ENCODE measurements at regions of chr4 and their contacts with region 1.

Region 1: DNA sequence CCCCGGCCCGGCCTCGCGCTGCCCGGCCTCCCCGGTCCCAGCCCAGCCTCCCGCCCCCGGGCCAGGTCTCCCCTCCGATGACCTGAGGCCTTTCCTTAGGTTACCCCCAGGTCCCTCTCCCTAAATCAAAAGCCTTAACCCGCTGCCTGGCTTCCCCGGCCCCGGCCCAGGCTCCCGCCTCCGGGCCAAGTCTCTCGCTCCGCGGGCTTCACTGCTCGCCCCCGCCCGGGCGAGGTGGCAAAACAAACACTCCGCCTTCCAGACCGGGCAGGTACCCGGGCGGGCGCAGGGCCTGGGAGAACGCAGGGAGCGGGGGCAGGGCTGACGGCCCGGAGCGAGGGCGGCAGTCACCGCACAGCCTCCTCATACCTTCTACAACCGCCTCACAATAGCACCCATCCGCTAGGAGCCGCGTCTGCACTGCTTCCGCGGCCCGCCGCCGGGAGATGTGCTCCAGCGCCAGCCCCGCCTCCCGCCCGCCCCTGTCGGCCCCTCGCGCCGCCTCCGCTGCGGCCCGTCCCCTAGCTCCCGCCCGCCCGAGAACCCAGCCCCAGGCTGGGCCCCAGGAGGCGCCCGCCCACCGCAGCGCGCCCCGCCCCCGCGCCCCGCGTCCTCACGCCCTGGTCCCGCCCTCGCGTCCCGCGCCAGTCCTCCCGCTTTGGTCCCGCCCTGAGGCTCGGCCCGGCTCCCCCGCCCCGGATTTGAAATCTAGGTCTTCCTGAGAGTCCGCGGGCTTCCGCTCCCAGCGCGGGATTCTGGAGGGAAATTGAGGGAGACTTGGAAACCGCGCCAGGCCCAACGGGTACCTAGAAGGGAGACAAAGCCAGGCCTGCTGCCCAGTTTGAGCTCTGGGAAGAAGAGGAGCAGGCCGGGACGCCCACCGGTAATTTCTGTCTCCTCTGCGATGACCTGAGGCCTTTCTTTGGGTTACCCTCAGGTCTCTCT is at the starts of genes CASP3 and PRIMPOL:
- DNase-seq: peak; percentile 90 to 98 (median 93)
- ATAC-seq: peak; percentile 96
- H3K4me3 ChIP-seq: peak within 1 kb of the TSS; percentile 92
- H3K4me3 Mint-ChIP-seq: peak within 1 kb of the TSS; percentile 92 to 99 (median 97)
- H3K27ac ChIP-seq: peak within 1 kb of the TSS; percentile 91
- H3K27ac Mint-ChIP-seq: peak within 1 kb of the TSS; percentile 91 to 97 (median 95)
- H3K4me1 ChIP-seq: peaks cover 26 to 37% of the 10 kb centered on the region in 2 donors
- H3K4me1 Mint-ChIP-seq: peaks cover 47 to 69% (median 54%) of the 10 kb centered on the region in 7 donors
- H3K27me3 ChIP-seq: no peaks in the 10 kb centered on the region
- H3K27me3 Mint-ChIP-seq: no peaks in the 10 kb centered on the region
- total RNA-seq, gene CASP3: 12.4 to 73.4 (median 17.2) TPM
- total RNA-seq, gene PRIMPOL: 12.1 to 19.3 (median 16.7) TPM

Region 2: DNA sequence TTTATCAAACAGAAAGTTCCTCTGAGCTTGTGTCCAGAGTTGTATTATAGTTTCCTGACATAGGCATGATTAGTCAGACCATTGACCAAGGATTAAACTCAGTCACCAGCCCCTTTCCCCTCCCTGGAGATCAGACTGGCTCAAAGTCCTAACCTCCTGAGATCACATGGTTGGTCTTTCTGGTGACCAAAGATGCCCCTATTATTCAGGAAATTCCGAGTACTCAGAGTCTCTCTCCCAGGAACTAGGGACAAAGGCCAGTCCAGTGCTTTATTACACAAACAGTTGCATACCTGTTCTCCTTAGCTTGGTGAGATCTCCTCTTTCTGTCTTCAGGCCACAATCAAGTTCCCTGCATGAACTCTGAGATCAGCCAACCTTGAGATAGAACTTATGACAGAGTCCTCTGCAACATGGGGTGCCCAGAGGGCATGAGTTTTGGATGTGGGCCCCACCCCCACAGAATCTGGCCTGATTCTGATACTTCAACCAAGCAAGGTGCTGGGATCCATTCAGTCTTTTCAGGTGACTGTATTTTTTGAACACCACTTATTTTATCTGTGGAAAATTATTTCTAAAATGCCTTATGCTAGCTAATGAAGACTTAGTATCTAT is 417.0 kb before region 1 on chr4:
- CTCF ChIA-PET with region 1: no interaction called
- POLR2A ChIA-PET with region 1: interaction called, 5 read pairs
- intact Hi-C with region 1: loop called in 1 of 2 experiments (anchors 1 kb)
- DNase-seq: no peak
- ATAC-seq: no peak
- H3K4me3 ChIP-seq: no peak overlapping the region
- H3K4me3 Mint-ChIP-seq: no peak overlapping the region
- H3K27ac ChIP-seq: no peak overlapping the region
- H3K27ac Mint-ChIP-seq: peak overlapping the region in 4 of 9 donors; percentile 1 to 42 (median 26)
- H3K4me1 ChIP-seq: peaks cover 15 to 19% of the 10 kb centered on the region in 2 donors
- H3K4me1 Mint-ChIP-seq: peaks cover 16 to 78% (median 30%) of the 10 kb centered on the region in 7 donors
- H3K27me3 ChIP-seq: no peaks in the 10 kb centered on the region
- H3K27me3 Mint-ChIP-seq: peaks cover 0 to 11% (median 0%) of the 10 kb centered on the region in 5 donors

Region 3: DNA sequence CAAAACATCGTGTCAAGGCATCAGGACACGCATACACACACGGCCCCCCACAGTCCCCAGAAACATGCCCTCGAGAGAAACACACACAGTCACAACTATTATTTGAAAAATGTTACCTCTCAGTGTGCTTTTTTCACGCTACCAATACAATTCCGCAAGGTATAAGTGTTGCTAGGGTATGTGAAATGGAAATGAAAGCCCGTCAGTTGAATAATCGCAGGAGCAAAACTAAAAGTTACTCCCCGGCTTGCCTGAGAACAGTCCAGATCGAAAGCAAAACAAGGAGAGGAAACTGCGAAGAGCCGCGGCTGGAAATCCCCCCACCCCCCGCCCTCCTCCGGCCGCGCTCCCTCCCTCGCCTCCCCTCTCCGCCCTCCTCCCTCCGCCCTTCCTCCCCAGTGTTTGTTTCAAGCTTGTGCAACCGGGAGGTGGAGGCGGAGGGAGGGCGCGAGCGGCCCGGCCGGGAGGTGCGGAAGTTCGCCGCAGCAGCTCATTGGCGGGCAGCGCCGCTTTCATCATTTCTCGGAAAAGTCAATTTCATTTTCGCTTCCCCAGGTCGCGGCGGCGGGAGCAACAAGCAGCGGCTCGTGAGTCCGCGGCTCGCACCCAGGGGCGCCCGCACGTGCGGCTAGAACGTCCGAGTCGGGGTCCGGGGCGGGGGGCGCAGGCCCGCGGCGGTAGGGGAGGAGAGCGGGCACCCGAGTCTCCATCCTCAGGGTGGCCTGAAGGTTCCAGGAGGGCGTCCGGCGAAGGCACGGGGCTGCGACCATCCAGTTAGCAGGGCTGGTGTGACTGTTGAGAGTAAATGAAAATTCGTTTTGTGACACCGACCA is 174.8 kb before region 1 on chr4 and contains the start of gene IRF2:
- CTCF ChIA-PET with region 1: no interaction called
- POLR2A ChIA-PET with region 1: interaction called, 16 read pairs
- intact Hi-C with region 1: loop called (anchors 1 kb)
- DNase-seq: peak; percentile 80 to 98 (median 95)
- ATAC-seq: peak; percentile 93
- H3K4me3 ChIP-seq: peak within 1 kb of the TSS; percentile 89
- H3K4me3 Mint-ChIP-seq: peak within 1 kb of the TSS; percentile 97 to 100 (median 99)
- H3K27ac ChIP-seq: peak within 1 kb of the TSS; percentile 96
- H3K27ac Mint-ChIP-seq: peak within 1 kb of the TSS; percentile 95 to 100 (median 99)
- H3K4me1 ChIP-seq: peaks cover 27 to 34% of the 10 kb centered on the region in 2 donors
- H3K4me1 Mint-ChIP-seq: peaks cover 39 to 72% (median 66%) of the 10 kb centered on the region in 7 donors
- H3K27me3 ChIP-seq: no peaks in the 10 kb centered on the region
- H3K27me3 Mint-ChIP-seq: peaks cover 0 to 4% (median 0%) of the 10 kb centered on the region in 5 donors
- total RNA-seq, gene IRF2: 31.2 to 86.3 (median 75.0) TPM

Region 4: DNA sequence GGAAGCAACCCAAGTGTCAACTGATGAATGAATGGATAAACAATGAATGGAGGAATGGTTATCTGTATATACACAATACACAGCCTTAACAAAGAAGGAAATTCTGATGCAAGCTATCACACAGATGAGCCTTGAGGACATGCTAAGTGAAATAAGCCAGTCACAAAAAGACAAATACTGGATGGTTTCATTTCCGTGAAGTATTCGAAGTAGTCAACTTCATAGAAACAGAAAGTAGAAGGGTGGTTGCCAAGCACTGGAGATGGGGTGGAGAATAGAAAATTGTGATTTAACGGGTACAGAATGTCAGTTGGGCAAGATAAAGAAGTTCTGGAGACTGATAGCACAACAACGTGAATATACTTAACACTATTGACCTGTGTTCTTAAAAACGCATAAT is 56.4 kb after region 1 on chr4:
- CTCF ChIA-PET with region 1: no interaction called
- POLR2A ChIA-PET with region 1: no interaction called
- intact Hi-C with region 1: loop called in 1 of 2 experiments (anchors 2 kb)
- DNase-seq: no peak
- ATAC-seq: no peak
- H3K4me3 ChIP-seq: no peak overlapping the region
- H3K4me3 Mint-ChIP-seq: peak overlapping the region in 2 of 10 donors; percentile 6 to 57
- H3K27ac ChIP-seq: no peak overlapping the region
- H3K27ac Mint-ChIP-seq: peak overlapping the region in 1 of 9 donors; percentile 83
- H3K4me1 ChIP-seq: no peaks in the 10 kb centered on the region
- H3K4me1 Mint-ChIP-seq: peaks cover 0 to 29% (median 0%) of the 10 kb centered on the region in 7 donors
- H3K27me3 ChIP-seq: no peaks in the 10 kb centered on the region
- H3K27me3 Mint-ChIP-seq: no peaks in the 10 kb centered on the region

Region 5: DNA sequence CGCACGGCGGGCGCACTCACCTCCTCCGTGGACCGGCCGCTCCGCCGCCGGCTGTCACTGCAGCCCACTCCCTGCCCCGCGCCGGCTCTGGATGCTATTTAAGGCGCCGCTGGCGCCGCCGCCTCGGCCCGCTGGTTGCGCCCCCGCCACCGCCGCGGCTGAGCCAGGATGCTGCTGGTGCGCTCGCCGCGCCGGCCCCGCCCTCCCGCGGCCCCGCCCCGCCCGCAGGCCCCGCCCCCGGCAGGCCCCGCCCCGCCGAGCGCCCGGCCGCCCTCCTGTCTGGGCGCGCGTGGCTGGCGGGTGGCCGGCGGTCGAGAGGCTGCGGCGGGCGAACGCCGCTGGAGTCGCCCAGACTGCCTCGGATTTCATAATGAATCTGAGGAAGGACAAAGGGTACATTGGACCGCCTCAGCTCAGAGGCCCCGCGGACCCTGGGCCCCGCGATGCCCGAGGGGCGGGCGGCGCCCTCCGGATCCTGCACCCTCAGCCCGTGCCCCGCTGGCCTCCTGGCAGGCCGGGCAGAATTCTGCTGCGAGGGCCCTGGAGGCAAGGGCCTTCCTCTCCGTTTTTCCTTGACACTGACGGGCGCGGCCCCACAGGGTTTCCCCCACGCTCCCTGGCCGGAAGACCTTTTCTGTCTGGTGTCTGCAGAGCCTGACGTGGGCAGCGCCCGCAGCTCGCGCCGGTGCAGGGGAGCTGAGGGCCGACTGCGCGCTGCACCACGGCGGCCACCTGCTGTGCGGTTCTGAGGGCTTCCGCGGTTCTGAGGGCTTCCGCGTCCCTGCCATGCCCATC is 176.8 kb after region 1 on chr4 and contains the start of gene ACSL1:
- CTCF ChIA-PET with region 1: no interaction called
- POLR2A ChIA-PET with region 1: no interaction called
- intact Hi-C with region 1: loop called (anchors 1 kb)
- DNase-seq: peak; percentile 63 to 83 (median 75)
- ATAC-seq: peak; percentile 95
- H3K4me3 ChIP-seq: peak within 1 kb of the TSS; percentile 59
- H3K4me3 Mint-ChIP-seq: peak within 1 kb of the TSS; percentile 89 to 94 (median 91)
- H3K27ac ChIP-seq: peak within 1 kb of the TSS; percentile 73
- H3K27ac Mint-ChIP-seq: peak within 1 kb of the TSS; percentile 79 to 91 (median 90)
- H3K4me1 ChIP-seq: peaks cover 4 to 7% of the 10 kb centered on the region in 2 donors
- H3K4me1 Mint-ChIP-seq: peaks cover 21 to 46% (median 33%) of the 10 kb centered on the region in 7 donors
- H3K27me3 ChIP-seq: no peaks in the 10 kb centered on the region
- H3K27me3 Mint-ChIP-seq: peaks cover 0 to 25% (median 0%) of the 10 kb centered on the region in 5 donors
- total RNA-seq, gene ACSL1: 9.5 to 80.1 (median 20.4) TPM

Region 6: DNA sequence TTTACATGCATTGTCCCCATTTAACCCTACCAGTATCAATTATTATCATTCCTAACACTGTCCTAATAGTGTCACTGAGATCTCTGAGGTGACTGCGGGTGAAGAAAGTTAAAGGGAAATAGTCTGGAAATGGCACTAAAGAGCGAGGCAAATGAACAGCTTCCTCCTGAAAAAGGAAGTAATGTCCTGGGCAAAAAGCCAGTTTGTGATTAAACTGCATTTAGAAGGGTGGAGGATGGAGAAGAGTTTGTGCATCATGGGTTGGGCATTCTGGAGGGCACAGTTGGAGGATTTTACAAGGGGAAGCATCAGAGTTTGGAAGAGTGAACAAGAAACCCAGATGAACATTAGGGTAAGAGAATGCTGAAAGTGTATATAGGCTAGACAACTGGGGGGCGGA is 433.3 kb after region 1 on chr4:
- CTCF ChIA-PET with region 1: no interaction called
- POLR2A ChIA-PET with region 1: no interaction called
- intact Hi-C with region 1: no loop called
- DNase-seq: no peak
- ATAC-seq: no peak
- H3K4me3 ChIP-seq: no peak overlapping the region
- H3K4me3 Mint-ChIP-seq: no peak overlapping the region
- H3K27ac ChIP-seq: no peak overlapping the region
- H3K27ac Mint-ChIP-seq: no peak overlapping the region
- H3K4me1 ChIP-seq: no peaks in the 10 kb centered on the region
- H3K4me1 Mint-ChIP-seq: peaks cover 0 to 2% (median 0%) of the 10 kb centered on the region in 7 donors
- H3K27me3 ChIP-seq: no peaks in the 10 kb centered on the region
- H3K27me3 Mint-ChIP-seq: peaks cover 0 to 41% (median 12%) of the 10 kb centered on the region in 5 donors

Region 7: DNA sequence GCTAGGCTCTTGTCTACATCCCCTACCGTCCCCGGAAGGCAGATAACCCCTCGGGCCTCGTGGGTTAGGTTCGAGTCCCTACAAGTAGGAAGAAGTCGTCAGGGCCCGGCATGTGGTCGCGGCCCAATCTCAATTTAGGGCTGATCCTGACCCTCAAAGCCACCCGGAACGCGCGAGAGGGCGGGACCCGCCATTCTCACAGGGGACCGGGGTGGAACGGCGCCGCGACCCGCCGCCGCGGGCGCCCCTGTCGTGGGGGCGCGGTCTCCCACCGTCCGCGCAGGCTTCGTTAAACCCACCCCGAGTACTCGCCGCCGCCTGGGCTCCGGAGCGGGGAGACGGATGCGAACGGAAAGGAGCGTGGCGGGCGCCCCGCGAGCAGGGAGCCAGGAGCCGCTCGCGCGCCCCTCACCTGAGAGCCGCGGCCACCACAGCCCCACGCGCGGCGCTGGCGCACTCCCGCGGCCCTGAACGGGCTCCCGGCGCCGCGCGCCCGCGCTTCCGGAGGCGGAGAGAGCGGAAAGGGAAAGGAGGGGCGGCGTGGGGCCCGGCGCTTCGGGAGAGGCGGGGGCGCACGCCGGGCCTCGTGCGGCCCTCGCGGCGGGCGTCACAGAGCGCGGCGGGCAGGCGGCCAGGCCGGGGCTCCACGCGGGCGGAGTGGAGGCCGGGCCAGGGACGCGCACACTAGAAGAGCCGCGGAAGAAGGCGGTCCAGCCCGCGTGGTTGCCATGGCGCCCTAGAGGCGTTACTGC is 554.4 kb after region 1 on chr4 and contains the start of gene CFAP97:
- CTCF ChIA-PET with region 1: no interaction called
- POLR2A ChIA-PET with region 1: no interaction called
- intact Hi-C with region 1: loop called (anchors 5 kb)
- DNase-seq: peak; percentile 78 to 90 (median 85)
- ATAC-seq: peak; percentile 89
- H3K4me3 ChIP-seq: peak within 1 kb of the TSS; percentile 64
- H3K4me3 Mint-ChIP-seq: peak within 1 kb of the TSS; percentile 87 to 99 (median 96)
- H3K27ac ChIP-seq: peak within 1 kb of the TSS; percentile 75
- H3K27ac Mint-ChIP-seq: peak within 1 kb of the TSS; percentile 95 to 99 (median 98)
- H3K4me1 ChIP-seq: peaks cover 22% of the 10 kb centered on the region in 2 donors
- H3K4me1 Mint-ChIP-seq: peaks cover 28 to 60% (median 53%) of the 10 kb centered on the region in 7 donors
- H3K27me3 ChIP-seq: no peaks in the 10 kb centered on the region
- H3K27me3 Mint-ChIP-seq: peaks cover 0 to 3% (median 0%) of the 10 kb centered on the region in 5 donors
- total RNA-seq, gene CFAP97: 23.6 to 46.5 (median 38.0) TPM

Region 8: GRCh38 chr4:186191200-186192065 is 1542.1 kb after region 1 on chr4 and contains the start of gene CYP4V2:
- CTCF ChIA-PET with region 1: no interaction called
- POLR2A ChIA-PET with region 1: no interaction called
- intact Hi-C with region 1: loop called in 1 of 2 experiments (anchors 2 kb)
- DNase-seq: peak; percentile 68 to 94 (median 90)
- ATAC-seq: peak; percentile 90
- H3K4me3 ChIP-seq: peak within 1 kb of the TSS; percentile 91
- H3K4me3 Mint-ChIP-seq: peak within 1 kb of the TSS; percentile 89 to 97 (median 94)
- H3K27ac ChIP-seq: peak within 1 kb of the TSS; percentile 95
- H3K27ac Mint-ChIP-seq: peak within 1 kb of the TSS; percentile 94 to 99 (median 98)
- H3K4me1 ChIP-seq: peaks cover 12 to 19% of the 10 kb centered on the region in 2 donors
- H3K4me1 Mint-ChIP-seq: peaks cover 34 to 62% (median 56%) of the 10 kb centered on the region in 7 donors
- H3K27me3 ChIP-seq: no peaks in the 10 kb centered on the region
- H3K27me3 Mint-ChIP-seq: no peaks in the 10 kb centered on the region
- total RNA-seq, gene CYP4V2: 19.7 to 41.4 (median 26.0) TPM

Measured in naive thymus-derived CD4-positive, alpha-beta T cell (primary cell).